ENCODE measurements at regions of chr4 and their contacts with region 1.

Region 1: DNA sequence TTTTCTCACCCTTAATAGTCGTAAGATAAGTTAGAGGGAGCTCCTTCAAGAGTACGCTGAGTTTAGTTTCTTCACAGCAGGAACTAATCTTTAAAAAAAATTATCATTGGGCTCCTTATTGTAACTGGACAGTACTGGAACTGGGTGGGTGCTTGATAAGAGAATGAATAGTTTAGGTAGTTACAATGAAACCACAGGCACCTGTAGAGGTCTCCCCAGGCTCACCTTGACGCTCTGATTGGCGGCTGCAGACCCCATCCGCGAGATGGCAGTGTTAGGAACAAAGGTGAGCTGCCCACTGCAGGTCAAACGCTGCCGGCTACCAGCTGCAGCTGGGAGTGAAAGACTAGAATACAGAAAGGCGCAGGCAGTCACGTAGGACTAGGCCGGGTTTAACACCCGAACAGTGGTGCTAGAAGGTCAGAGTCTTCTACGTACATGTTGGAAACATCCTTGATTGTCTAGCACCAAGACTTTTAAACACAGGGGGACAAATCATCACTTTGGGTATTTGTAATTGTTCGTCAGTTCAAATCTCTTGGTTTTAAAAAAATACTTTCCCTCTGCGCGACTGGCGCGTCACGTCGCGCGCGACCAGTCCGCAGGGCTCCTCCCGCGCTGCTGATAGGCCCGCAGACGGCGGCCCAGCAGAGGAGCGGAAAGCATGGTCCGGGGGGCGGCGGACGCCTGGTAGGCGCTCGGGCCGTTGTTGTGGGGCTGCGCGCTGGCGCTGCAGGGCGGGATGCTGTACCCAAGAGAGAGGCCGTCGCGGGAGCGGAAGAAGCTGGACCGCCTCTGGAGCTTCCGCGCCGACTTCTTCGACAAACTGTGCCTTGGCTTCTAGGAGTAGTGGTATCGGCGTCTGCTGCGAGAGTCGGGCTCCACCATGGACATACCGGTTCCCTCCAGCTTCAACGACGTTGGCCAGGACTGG is 45.6 kb downstream of the SMARCA5 start:
- DNase-seq: peak; percentile 38 to 80 (median 58)
- ATAC-seq: peak; percentile 86
- H3K4me3 ChIP-seq: peak overlapping the region; percentile 79
- H3K4me3 Mint-ChIP-seq: peak overlapping the region; percentile 87 to 97 (median 90)
- H3K27ac ChIP-seq: peak overlapping the region; percentile 52
- H3K27ac Mint-ChIP-seq: peak overlapping the region; percentile 78 to 96 (median 91)
- H3K4me1 ChIP-seq: peaks cover 7 to 11% of the 10 kb centered on the region in 2 donors
- H3K4me1 Mint-ChIP-seq: peaks cover 8 to 40% (median 28%) of the 10 kb centered on the region in 7 donors
- H3K27me3 ChIP-seq: no peaks in the 10 kb centered on the region
- H3K27me3 Mint-ChIP-seq: no peaks in the 10 kb centered on the region

Region 2: GRCh38 chr4:143482840-143483239 is 76.2 kb before region 1 on chr4:
- CTCF ChIA-PET with region 1: no interaction called
- POLR2A ChIA-PET with region 1: no interaction called
- intact Hi-C with region 1: no loop called
- DNase-seq: peak in 1 of 9 donors; percentile 3
- ATAC-seq: no peak
- H3K4me3 ChIP-seq: no peak overlapping the region
- H3K4me3 Mint-ChIP-seq: no peak overlapping the region
- H3K27ac ChIP-seq: no peak overlapping the region
- H3K27ac Mint-ChIP-seq: no peak overlapping the region
- H3K4me1 ChIP-seq: no peaks in the 10 kb centered on the region
- H3K4me1 Mint-ChIP-seq: no peaks in the 10 kb centered on the region
- H3K27me3 ChIP-seq: no peaks in the 10 kb centered on the region
- H3K27me3 Mint-ChIP-seq: peaks cover 12 to 19% (median 17%) of the 10 kb centered on the region in 5 donors

Region 3: DNA sequence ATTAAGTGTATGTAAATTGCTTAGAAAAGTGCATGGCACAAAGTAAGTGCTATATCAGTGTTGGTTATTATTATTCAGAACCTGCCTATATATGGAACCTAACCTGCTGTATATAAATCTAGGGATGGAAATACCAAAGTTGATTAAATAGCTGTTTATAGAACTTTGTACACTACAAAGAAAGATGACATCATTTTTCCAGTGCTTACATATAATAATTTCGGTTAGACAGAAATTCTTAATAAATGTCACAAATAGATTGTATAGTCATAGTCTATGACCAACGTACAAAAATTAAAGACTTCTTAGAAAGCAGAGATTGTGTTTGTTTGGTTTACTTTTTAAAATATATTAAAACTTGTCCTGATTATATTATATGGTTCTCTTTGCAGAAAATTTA is 455.7 kb after region 1 on chr4:
- CTCF ChIA-PET with region 1: no interaction called
- POLR2A ChIA-PET with region 1: no interaction called
- intact Hi-C with region 1: loop called in 1 of 2 experiments (anchors 2 kb)
- DNase-seq: no peak
- ATAC-seq: no peak
- H3K4me3 ChIP-seq: no peak overlapping the region
- H3K4me3 Mint-ChIP-seq: no peak overlapping the region
- H3K27ac ChIP-seq: no peak overlapping the region
- H3K27ac Mint-ChIP-seq: no peak overlapping the region
- H3K4me1 ChIP-seq: no peaks in the 10 kb centered on the region
- H3K4me1 Mint-ChIP-seq: no peaks in the 10 kb centered on the region
- H3K27me3 ChIP-seq: no peaks in the 10 kb centered on the region
- H3K27me3 Mint-ChIP-seq: peaks cover 0 to 9% (median 0%) of the 10 kb centered on the region in 5 donors

Region 4: GRCh38 chr4:144115519-144115918 is 556.4 kb after region 1 on chr4:
- CTCF ChIA-PET with region 1: no interaction called
- POLR2A ChIA-PET with region 1: no interaction called
- intact Hi-C with region 1: loop called in 1 of 2 experiments (anchors 5 kb)
- DNase-seq: no peak
- ATAC-seq: no peak
- H3K4me3 ChIP-seq: no peak overlapping the region
- H3K4me3 Mint-ChIP-seq: no peak overlapping the region
- H3K27ac ChIP-seq: no peak overlapping the region
- H3K27ac Mint-ChIP-seq: no peak overlapping the region
- H3K4me1 ChIP-seq: no peaks in the 10 kb centered on the region
- H3K4me1 Mint-ChIP-seq: no peaks in the 10 kb centered on the region
- H3K27me3 ChIP-seq: no peaks in the 10 kb centered on the region
- H3K27me3 Mint-ChIP-seq: peaks cover 0 to 14% (median 5%) of the 10 kb centered on the region in 5 donors

Region 5: GRCh38 chr4:144734522-144734921 is 1175.4 kb after region 1 on chr4:
- CTCF ChIA-PET with region 1: no interaction called
- POLR2A ChIA-PET with region 1: no interaction called
- intact Hi-C with region 1: no loop called
- DNase-seq: no peak
- ATAC-seq: no peak
- H3K4me3 ChIP-seq: no peak overlapping the region
- H3K4me3 Mint-ChIP-seq: no peak overlapping the region
- H3K27ac ChIP-seq: no peak overlapping the region
- H3K27ac Mint-ChIP-seq: no peak overlapping the region
- H3K4me1 ChIP-seq: no peaks in the 10 kb centered on the region
- H3K4me1 Mint-ChIP-seq: no peaks in the 10 kb centered on the region
- H3K27me3 ChIP-seq: no peaks in the 10 kb centered on the region
- H3K27me3 Mint-ChIP-seq: peaks cover 0 to 3% (median 0%) of the 10 kb centered on the region in 5 donors